Left ventricle myocardium inferior (tissue), 1 donor: ENCODE measurements at regions of chr7 and their contacts with region 1.

Region 1: GRCh38 chr7:93551063-93551904 is 23.2 kb downstream of the CALCR start:
- DNase-seq: no peak
- H3K4me3 ChIP-seq: no peak overlapping the region
- H3K27ac ChIP-seq: no peak overlapping the region
- H3K4me1 ChIP-seq: no peaks in the 10 kb centered on the region
- H3K27me3 ChIP-seq: no peaks in the 10 kb centered on the region
- CTCF ChIP-seq: peak; percentile 45

Region 2: DNA sequence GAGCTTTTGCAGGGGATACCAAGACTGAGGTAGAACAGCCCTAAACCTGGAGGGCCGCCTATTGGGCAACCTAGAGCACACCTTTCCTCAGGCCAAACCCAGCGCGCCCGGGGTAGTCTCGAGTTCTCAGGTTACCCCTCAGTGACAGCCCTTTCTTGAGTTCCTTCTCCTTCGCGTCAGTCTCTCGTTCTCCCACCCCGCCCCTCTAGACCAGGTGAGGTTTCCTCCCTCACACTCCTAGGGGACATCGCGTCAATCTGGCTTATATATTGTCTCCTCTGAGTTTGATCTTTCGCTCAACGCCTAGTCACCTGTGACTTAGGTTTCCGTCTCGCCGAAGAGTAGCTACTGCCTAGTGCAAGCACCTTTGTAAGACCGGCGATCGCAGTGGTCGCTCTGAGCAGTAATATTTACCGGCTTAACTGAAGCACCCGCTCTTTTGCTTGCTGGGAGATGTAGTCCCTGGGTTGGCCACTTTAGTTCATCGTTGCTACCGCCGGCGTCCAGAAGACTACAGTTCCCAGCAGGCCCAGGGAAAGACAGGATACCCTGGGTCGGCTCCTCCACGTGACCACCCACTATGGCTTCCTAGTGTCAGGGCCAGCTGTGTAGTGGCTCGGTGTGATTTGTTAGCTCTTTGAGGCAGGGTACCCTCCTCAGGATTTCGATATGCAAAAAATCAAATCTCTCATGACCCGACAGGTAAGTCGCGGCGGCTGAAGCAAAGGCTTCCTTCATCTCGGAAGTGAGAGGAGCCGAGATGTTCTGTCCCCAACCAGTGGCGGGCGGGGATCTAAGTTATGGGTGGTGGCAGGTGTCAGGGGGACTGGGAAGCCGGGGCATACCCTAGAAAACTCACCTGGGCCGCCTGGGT is 319.2 kb before region 1 on chr7 and contains the start of gene VPS50:
- intact Hi-C with region 1: no loop called
- DNase-seq: peak; percentile 92
- H3K4me3 ChIP-seq: peak within 1 kb of the TSS; percentile 86
- H3K27ac ChIP-seq: peak within 1 kb of the TSS; percentile 63
- H3K4me1 ChIP-seq: peaks cover 28% of the 10 kb centered on the region
- H3K27me3 ChIP-seq: no peaks in the 10 kb centered on the region
- CTCF ChIP-seq: peak; percentile 20
- total RNA-seq, gene VPS50: 19.5 TPM

Region 3: GRCh38 chr7:93245525-93246432 is 305.5 kb before region 1 on chr7:
- intact Hi-C with region 1: loop called (anchors 10 kb)
- DNase-seq: no peak
- H3K4me3 ChIP-seq: no peak overlapping the region
- H3K27ac ChIP-seq: no peak overlapping the region
- H3K4me1 ChIP-seq: peaks cover 5% of the 10 kb centered on the region
- H3K27me3 ChIP-seq: no peaks in the 10 kb centered on the region
- CTCF ChIP-seq: peak; percentile 74

Region 4: DNA sequence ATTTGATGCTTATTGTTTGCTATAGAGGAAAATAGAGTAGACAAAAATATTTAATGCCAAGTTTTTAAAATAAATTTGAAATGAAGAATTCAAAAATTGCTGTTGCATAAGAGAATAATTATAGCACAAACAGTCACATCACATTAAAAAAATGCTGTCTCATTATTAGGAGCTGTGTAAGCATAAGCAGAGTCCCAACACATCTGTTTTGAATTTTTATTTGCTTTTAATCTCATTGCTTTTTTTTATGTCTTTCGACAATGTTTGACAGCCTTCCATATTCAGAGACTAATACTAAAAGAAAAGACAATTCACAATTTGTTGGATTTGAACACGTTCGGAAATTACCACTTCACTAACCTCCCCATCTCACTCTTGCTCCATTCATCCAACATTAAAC is 195.7 kb after region 1 on chr7:
- intact Hi-C with region 1: no loop called
- DNase-seq: no peak
- H3K4me3 ChIP-seq: no peak overlapping the region
- H3K27ac ChIP-seq: no peak overlapping the region
- H3K4me1 ChIP-seq: no peaks in the 10 kb centered on the region
- H3K27me3 ChIP-seq: no peaks in the 10 kb centered on the region
- CTCF ChIP-seq: no peak